ENCODE measurements at regions of chr19 and their contacts with region 1.

Region 1: GRCh38 chr19:13846557-13847406 is 30.2 kb upstream of the NANOS3 start:
- DNase-seq: peak; percentile 88 to 100 (median 98)
- ATAC-seq: peak; percentile 62 to 75
- H3K4me3 Mint-ChIP-seq: peak overlapping the region; percentile 84 to 94 (median 91)
- H3K27ac Mint-ChIP-seq: peak overlapping the region; percentile 99 to 100 (median 100)
- H3K4me1 Mint-ChIP-seq: peaks cover 26 to 72% (median 56%) of the 10 kb centered on the region in 4 donors
- H3K27me3 Mint-ChIP-seq: peaks cover 0 to 4% (median 0%) of the 10 kb centered on the region in 5 donors

Region 2: DNA sequence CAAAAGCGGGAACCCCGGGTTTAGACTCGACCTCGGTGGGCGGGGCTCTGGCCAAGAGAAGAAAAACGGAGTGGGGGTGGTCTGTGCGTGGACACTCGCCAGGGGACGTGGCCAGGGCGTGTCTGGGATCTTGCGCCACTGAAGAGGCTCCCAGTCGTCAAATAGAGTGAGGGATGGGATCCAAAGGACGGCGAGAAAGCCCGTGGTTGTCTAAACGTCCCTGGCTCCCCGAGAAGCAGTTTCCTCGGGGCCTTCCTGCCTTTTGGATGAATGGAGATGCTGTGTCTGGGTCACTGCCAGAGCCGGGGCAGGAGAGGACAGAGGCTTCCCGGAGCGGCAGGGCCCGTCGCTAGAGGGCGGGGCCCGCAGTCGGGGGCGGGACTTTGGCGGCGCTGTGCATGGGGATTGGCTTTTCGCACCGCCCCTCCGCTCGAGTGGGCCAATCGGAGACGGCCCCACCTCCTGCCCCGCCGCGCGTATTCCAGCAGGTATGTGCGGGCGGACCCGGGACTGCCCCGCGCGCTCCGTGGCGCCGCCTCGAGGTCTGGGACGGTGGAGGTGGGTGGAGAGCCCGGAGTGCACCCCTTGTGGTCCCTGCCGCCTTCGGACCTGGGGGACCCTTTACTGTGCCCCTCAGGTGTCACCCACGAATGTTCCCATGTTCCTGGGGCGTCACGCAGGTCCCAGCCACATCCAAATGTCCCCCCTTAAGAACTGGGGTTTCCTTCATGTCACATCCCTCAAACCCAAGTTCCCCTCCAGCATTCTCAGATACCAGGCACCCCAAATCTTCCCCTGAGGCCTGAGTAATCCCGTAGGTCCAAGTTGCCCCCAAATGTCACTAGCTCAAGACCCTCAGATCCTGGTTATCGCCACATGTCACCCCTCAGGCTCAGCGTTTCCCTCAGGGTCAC is 13.2 kb before region 1 on chr19:
- POLR2A ChIA-PET with region 1: interaction called, 65 read pairs
- DNase-seq: peak; percentile 84 to 95 (median 92)
- ATAC-seq: peak; percentile 69 to 78
- H3K4me3 Mint-ChIP-seq: peak overlapping the region; percentile 82 to 94 (median 88)
- H3K27ac Mint-ChIP-seq: peak overlapping the region; percentile 84 to 99 (median 94)
- H3K4me1 Mint-ChIP-seq: peaks cover 19 to 50% (median 42%) of the 10 kb centered on the region in 4 donors
- H3K27me3 Mint-ChIP-seq: no peaks in the 10 kb centered on the region

Region 3: GRCh38 chr19:13861732-13862531 is 15.2 kb after region 1 on chr19:
- POLR2A ChIA-PET with region 1: interaction called, 10 read pairs
- DNase-seq: peak; percentile 70 to 91 (median 86)
- ATAC-seq: peak; percentile 81 to 86
- H3K4me3 Mint-ChIP-seq: peak overlapping the region; percentile 87 to 97 (median 92)
- H3K27ac Mint-ChIP-seq: peak overlapping the region; percentile 84 to 99 (median 96)
- H3K4me1 Mint-ChIP-seq: peaks cover 21 to 43% (median 40%) of the 10 kb centered on the region in 4 donors
- H3K27me3 Mint-ChIP-seq: peaks cover 8 to 24% (median 20%) of the 10 kb centered on the region in 5 donors